AG04450 (cell line): ENCODE measurements at regions of chr16 and their contacts with region 1.

Region 1: GRCh38 chr16:66344533-66345145 is 21.9 kb upstream of the CDH5 start:
- DNase-seq: no peak
- H3K4me3 ChIP-seq: no peak overlapping the region
- H3K27ac ChIP-seq: no peak overlapping the region
- H3K27me3 ChIP-seq: peaks cover 34% of the 10 kb centered on the region
- CTCF ChIP-seq: peak; percentile 71

Region 2: DNA sequence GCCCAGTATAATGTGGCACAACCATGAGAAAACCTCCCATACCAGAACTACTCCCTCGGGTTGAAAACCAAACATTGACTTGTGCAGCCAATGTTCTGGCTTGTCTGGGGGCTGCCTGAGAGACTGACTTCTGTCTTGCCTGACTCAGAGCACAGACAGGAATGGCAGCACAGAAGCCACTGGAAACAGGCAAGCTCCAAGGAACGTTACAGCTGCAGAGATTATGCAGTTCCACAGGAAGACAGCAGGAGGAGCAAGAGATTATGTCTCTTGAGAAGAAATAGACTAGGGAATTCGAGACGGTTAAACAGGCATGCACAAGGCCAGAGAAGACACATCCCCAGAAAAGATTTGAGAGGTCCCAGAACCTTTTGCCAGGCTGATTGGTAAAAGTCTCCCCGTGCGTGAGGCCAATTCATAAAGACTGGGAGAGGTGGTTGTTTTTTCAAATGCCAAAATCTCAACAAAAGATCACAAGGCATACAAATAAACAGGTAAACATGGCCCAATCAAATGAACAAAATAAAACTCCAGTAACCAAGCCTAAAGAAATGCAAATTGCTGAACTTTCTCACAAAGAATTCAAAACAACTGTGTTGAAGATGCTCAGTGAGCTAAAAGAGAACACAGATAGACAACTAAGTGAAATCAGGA is 68.7 kb before region 1 on chr16:
- CTCF ChIA-PET with region 1: interaction called, 18 read pairs
- POLR2A ChIA-PET with region 1: no interaction called
- DNase-seq: no peak
- H3K4me3 ChIP-seq: no peak overlapping the region
- H3K27ac ChIP-seq: no peak overlapping the region
- H3K27me3 ChIP-seq: peaks cover 9% of the 10 kb centered on the region
- CTCF ChIP-seq: peak; percentile 79

Region 3: DNA sequence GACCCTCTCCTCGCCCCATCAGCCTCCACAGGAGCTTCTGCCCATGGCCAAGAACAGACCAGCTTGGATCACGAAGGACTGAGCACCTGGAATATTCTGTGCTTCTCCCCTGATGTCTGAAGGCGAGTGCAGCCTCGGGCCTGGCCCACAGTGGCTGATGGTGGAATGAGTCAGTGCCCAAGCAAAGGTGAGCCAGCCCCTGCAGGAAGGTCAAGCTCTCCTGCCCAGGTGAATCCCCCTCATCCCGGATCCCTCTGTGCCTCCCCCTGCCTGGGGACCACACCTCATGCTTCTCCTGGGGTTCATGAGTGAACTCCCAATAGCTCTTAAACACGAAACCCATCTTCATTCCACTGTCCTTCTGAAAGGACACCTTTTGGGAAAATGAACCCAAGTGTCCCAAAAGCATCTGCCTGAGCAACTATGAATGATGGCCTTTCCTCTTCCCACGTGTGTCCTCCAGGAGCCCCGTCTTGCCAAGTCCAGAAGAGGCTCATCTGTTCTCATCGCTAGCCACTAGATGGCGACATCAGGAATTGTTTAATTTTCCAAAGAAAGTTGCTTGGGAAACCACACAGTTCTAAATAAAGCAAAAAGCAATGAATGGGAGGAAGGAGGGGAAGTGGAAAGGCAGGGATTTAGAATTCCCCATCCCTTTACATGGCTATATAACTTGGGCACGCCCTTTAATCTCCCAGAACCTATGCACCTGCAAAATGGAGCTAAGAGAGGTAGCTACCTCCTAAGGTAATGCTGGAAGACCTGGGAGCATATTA is 12.7 kb after region 1 on chr16:
- CTCF ChIA-PET with region 1: interaction called, 55 read pairs
- POLR2A ChIA-PET with region 1: no interaction called
- DNase-seq: peak; percentile 62
- H3K4me3 ChIP-seq: no peak overlapping the region
- H3K27ac ChIP-seq: no peak overlapping the region
- H3K27me3 ChIP-seq: peaks cover 45% of the 10 kb centered on the region
- CTCF ChIP-seq: peak; percentile 80